Aorta (tissue), 5 donors: ENCODE measurements at regions of chr12 and their contacts with region 1.

Region 1: GRCh38 chr12:64890873-64891468 is 66.5 kb downstream of the TBC1D30 start:
- DNase-seq: no peak
- ATAC-seq: peak; percentile 84
- H3K4me3 ChIP-seq: no peak overlapping the region
- H3K27ac ChIP-seq: no peak overlapping the region
- H3K4me1 ChIP-seq: no peaks in the 10 kb centered on the region
- H3K27me3 ChIP-seq: no peaks in the 10 kb centered on the region

Region 2: DNA sequence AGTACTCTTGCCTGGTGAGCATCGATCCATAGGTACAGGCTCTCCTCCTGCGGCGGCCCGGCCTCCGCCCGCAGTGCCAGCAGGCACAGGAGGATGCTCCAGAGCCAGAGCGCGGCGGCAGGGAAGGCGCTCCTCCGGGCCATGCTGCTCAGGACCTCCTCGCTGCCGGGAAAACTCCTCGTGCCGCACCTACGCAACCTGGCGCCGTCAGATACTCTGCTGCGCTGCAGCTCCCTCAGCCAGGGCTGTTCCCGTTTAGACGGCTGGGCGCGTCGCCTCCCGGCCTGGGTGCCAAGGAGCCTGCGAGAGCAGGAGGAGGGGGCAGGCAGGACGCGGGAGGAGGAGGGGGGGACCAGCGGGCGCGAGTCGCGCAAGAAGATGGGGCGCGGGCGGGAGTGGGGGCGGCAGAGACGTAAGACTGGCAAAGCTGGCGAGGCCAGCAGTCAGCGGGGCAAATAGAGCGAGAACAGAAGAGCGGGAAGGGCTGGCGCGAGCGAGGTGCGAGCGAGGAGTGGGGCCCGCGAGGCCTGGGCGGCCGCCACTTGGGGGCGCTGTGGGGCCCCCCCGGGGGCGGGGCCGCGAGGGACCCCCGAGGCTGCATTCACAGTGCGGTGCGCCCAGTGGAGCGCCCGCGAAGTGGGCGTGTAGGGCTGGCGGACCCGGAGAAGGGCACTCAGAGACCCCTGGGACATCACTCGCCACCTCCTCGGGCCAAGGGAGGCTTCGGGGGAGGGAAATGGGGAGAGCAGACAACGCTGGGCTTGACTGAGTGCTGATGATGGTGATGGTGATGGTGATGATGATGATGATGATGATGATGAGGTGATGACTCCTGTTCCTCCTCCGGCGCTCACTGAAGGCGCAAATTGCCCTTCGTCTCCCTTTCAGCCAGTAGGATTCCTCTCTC is 230.3 kb after region 1 on chr12 and contains the start of gene WIF1:
- intact Hi-C with region 1: loop called (anchors 5 to 10 kb)
- DNase-seq: peak; percentile 54 to 77
- ATAC-seq: peak; percentile 76
- H3K4me3 ChIP-seq: no peak within 1 kb of the TSS
- H3K27ac ChIP-seq: no peak within 1 kb of the TSS
- H3K4me1 ChIP-seq: no peaks in the 10 kb centered on the region
- H3K27me3 ChIP-seq: peaks cover 0 to 3% of the 10 kb centered on the region in 2 donors
- total RNA-seq, gene WIF1: 0.48 TPM in 1 of 2 donors, not detected in the other

Region 3: DNA sequence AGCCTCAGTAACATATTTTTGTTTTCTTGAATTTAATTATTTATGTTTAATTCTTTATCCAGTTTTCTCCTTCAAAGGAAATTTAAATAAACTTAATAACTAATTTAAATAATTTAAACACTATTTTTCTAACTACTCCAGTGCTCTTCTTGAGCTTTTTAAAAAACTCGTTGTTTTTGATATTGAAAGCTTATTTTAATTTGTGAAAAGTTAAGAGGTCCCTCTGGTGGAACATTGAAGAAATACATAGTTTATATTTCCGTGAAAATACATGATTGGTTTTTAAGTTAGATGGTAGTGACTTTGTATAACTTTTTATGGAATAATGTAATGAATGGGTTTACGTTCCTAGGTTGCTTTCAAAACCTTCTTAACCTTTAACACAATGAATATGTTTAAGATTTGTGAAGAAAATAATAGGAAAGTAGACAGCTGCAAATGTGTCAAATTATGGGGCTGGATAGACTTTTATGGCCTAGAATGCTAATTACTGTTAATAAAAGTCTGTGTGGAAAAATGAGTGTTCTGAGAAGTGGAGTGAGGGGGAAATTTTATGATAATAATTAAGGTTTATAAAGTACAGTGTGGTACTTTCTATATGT is 341.6 kb after region 1 on chr12:
- intact Hi-C with region 1: loop called (anchors 5 kb)
- DNase-seq: no peak
- ATAC-seq: no peak
- H3K4me3 ChIP-seq: no peak overlapping the region
- H3K27ac ChIP-seq: no peak overlapping the region
- H3K4me1 ChIP-seq: no peaks in the 10 kb centered on the region
- H3K27me3 ChIP-seq: no peaks in the 10 kb centered on the region

Region 4: DNA sequence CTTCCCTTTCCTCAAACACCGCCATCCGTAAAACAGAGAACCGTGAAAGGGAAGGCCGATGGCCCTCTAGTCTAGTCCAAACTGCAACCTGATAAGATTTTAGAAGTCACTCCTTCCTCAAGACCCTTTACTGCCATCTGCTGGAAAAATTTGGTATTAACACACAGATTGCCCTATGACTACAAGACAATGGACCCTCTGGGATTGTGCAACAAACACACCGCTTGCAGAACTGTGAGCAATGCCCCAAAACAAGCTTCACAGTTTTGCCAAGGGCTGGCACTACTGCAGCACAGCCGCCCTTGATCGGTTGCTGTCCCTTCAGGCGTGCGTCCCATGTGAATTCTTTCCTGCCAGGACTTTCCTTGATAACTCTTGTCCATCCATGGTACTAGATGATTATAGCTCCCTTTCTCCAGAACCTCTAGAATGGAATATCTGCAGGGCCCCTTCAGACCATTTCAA is 1216.5 kb after region 1 on chr12:
- intact Hi-C with region 1: loop called (anchors 5 to 10 kb)
- DNase-seq: no peak
- ATAC-seq: peak; percentile 92
- H3K4me3 ChIP-seq: no peak overlapping the region
- H3K27ac ChIP-seq: no peak overlapping the region
- H3K4me1 ChIP-seq: no peaks in the 10 kb centered on the region
- H3K27me3 ChIP-seq: no peaks in the 10 kb centered on the region